GM12878 (cell line): ENCODE measurements at regions of chr11 and their contacts with region 1.

Region 1: DNA sequence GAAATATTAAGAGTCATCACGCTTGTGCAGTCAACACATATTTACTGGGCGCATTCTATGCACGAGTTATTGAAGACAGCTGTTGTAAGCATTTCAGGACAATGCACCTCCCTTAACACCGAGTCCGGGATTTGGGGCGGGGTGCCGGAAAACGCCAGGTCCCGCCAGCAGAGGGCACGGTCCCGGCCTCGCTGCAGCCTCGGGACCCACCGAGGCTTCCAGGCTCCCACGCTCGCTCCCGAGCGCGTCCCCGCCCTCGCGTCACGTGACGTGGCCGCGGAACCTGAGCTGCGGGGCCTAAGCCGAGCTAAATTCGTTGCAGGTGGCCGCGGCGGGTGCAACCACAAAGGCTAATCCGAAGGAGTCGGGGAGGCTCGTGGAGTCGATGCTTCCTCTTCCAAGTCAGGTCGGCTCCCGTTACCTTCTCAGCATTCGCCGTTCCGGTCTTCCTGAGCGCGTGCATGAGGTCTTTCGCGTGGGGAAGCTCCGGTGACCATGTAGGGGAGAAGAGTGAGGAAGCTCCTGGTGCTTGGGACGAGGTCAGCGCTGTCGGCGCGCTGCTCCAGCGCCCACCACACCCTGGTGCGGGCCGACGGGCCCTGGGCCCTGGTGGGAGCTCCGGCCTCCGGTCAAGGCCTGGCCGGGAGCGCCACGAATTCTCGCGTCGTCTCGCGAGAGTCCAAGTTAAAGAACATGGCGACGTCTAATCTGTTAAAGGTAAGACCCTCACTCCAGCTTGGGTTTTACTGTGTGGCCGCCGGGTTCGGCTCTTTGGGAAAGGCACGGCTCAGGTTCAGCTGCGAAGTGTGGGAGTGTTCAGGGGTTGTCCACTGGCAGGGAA is at the start of gene CUL5:
- DNase-seq: peak; percentile 60
- ATAC-seq: peak; percentile 89
- H3K4me3 ChIP-seq: peak within 1 kb of the TSS; percentile 80
- H3K27ac ChIP-seq: peak within 1 kb of the TSS; percentile 80
- H3K4me1 ChIP-seq: no peaks in the 10 kb centered on the region
- H3K27me3 ChIP-seq: no peaks in the 10 kb centered on the region
- CTCF ChIP-seq: peak; percentile 86 to 93 (median 90)
- EP300 ChIP-seq: no peak; a peak in 1 of 4 replicates
- POLR2A ChIP-seq: peak; percentile 94
- RAD21 ChIP-seq: peak; percentile 54
- polyA plus RNA-seq, gene CUL5: 9.1 to 11.8 TPM

Region 2: GRCh38 chr11:107988397-107989158 is 20.3 kb before region 1 on chr11:
- CTCF ChIA-PET with region 1: interaction called, 13 read pairs
- POLR2A ChIA-PET with region 1: no interaction called
- RAD21 ChIA-PET with region 1: interaction called, 5 read pairs
- SMC1A ChIA-PET with region 1: no interaction called
- in situ Hi-C with region 1: no loop called
- intact Hi-C with region 1: no loop called
- DNase-seq: peak; percentile 25
- ATAC-seq: peak; percentile 89
- H3K4me3 ChIP-seq: no peak overlapping the region
- H3K27ac ChIP-seq: no peak overlapping the region
- H3K4me1 ChIP-seq: no peaks in the 10 kb centered on the region; the same call in 1 of the 2 replicates
- H3K27me3 ChIP-seq: no peaks in the 10 kb centered on the region
- CTCF ChIP-seq: no peak
- EP300 ChIP-seq: no peak
- POLR2A ChIP-seq: no peak
- RAD21 ChIP-seq: no peak

Region 3: GRCh38 chr11:108025387-108026080 is 16.7 kb after region 1 on chr11:
- CTCF ChIA-PET with region 1: interaction called, 19 read pairs
- POLR2A ChIA-PET with region 1: interaction called, 7 read pairs
- RAD21 ChIA-PET with region 1: interaction called, 30 read pairs
- SMC1A ChIA-PET with region 1: interaction called, 13 read pairs
- in situ Hi-C with region 1: no loop called
- intact Hi-C with region 1: no loop called
- DNase-seq: peak; percentile 53
- ATAC-seq: peak; percentile 99
- H3K4me3 ChIP-seq: peak overlapping the region; percentile 6; the same call in 1 of the 2 replicates
- H3K27ac ChIP-seq: peak overlapping the region; percentile 75
- H3K4me1 ChIP-seq: peaks cover 11% of the 10 kb centered on the region
- H3K27me3 ChIP-seq: no peaks in the 10 kb centered on the region
- CTCF ChIP-seq: peak; percentile 14 to 51 (median 37); a peak in 5 of 6 replicates
- EP300 ChIP-seq: no peak
- POLR2A ChIP-seq: no peak
- RAD21 ChIP-seq: no peak

Region 4: GRCh38 chr11:108069947-108070346 is 61.1 kb after region 1 on chr11:
- CTCF ChIA-PET with region 1: interaction called, 9 read pairs
- POLR2A ChIA-PET with region 1: no interaction called
- RAD21 ChIA-PET with region 1: interaction called, 13 read pairs
- SMC1A ChIA-PET with region 1: interaction called, 4 read pairs
- in situ Hi-C with region 1: no loop called
- intact Hi-C with region 1: no loop called
- DNase-seq: peak; percentile 4
- ATAC-seq: peak; percentile 88
- H3K4me3 ChIP-seq: no peak overlapping the region
- H3K27ac ChIP-seq: no peak overlapping the region; the same call in 1 of the 2 replicates
- H3K4me1 ChIP-seq: no peaks in the 10 kb centered on the region
- H3K27me3 ChIP-seq: no peaks in the 10 kb centered on the region
- CTCF ChIP-seq: no peak
- EP300 ChIP-seq: no peak
- POLR2A ChIP-seq: no peak
- RAD21 ChIP-seq: no peak

Region 5: GRCh38 chr11:108222686-108223448 is 214.0 kb after region 1 on chr11 and contains the start of gene ATM:
- CTCF ChIA-PET with region 1: interaction called, 11 read pairs
- POLR2A ChIA-PET with region 1: no interaction called
- RAD21 ChIA-PET with region 1: interaction called, 8 read pairs
- SMC1A ChIA-PET with region 1: interaction called, 3 read pairs
- in situ Hi-C with region 1: no loop called
- intact Hi-C with region 1: no loop called
- DNase-seq: peak; percentile 99
- ATAC-seq: peak; percentile 88
- H3K4me3 ChIP-seq: peak within 1 kb of the TSS; percentile 97
- H3K27ac ChIP-seq: peak within 1 kb of the TSS; percentile 99
- H3K4me1 ChIP-seq: peaks cover 19% of the 10 kb centered on the region
- H3K27me3 ChIP-seq: no peaks in the 10 kb centered on the region
- CTCF ChIP-seq: peak; percentile 85 to 96 (median 88)
- EP300 ChIP-seq: peak in 1 of 2 experiments; percentile 50; a peak in 2 of 4 replicates
- POLR2A ChIP-seq: peak; percentile 74
- RAD21 ChIP-seq: peak; percentile 81
- polyA plus RNA-seq, gene ATM: 10.0 to 10.5 TPM

Region 6: DNA sequence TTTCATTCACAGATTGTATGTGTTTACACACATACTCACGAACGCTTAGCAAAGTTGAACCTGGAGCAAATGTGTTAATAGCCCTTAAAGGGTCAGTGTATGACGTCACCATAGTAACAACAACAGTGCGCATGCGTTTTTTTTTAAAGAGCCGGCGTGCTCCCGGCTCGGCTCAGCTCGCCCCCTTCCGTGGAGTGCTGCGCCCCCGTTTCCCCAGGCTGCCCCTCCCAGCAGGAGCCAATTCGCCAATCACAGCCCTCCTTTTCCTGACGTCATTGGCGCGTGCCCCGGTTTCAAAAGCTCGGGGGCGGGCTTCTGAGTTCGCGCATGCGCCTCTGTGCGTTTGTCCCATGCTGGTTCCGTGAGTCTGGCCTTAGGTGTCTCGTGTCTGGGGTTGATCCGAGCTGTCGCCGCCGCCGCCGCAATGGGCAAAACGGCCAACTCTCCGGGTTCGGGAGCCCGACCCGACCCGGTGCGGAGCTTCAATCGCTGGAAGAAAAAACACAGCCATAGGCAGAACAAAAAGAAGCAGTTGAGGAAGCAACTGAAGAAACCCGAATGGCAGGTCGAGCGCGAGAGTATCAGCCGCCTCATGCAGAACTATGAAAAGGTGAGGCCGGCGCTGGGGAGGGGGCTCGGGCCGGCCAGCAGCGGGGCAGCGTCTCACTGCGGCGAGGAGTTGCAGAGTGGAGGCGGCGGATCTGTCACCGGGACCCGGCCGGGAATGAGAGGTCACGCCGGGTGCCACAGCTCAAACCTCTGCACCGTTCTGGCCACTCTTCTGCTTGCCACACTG is 656.1 kb after region 1 on chr11 and contains the start of gene DDX10:
- CTCF ChIA-PET with region 1: interaction called, 3 read pairs
- POLR2A ChIA-PET with region 1: no interaction called
- RAD21 ChIA-PET with region 1: interaction called, 4 read pairs
- SMC1A ChIA-PET with region 1: no interaction called
- in situ Hi-C with region 1: no loop called
- intact Hi-C with region 1: loop called (anchors 10 kb)
- DNase-seq: peak; percentile 92
- ATAC-seq: peak; percentile 84
- H3K4me3 ChIP-seq: peak within 1 kb of the TSS; percentile 94
- H3K27ac ChIP-seq: peak within 1 kb of the TSS; percentile 79
- H3K4me1 ChIP-seq: peaks cover 30% of the 10 kb centered on the region
- H3K27me3 ChIP-seq: no peaks in the 10 kb centered on the region
- CTCF ChIP-seq: no peak; a peak in 1 of 6 replicates
- EP300 ChIP-seq: no peak; a peak in 1 of 4 replicates
- POLR2A ChIP-seq: peak; percentile 75
- RAD21 ChIP-seq: no peak
- polyA plus RNA-seq, gene DDX10: 20.9 to 31.5 TPM